ENCODE measurements at regions of chr17 and their contacts with region 1.

Region 1: GRCh38 chr17:78082988-78083387 is 45.6 kb downstream of the TMC6 start:
- DNase-seq: no peak
- H3K4me3 Mint-ChIP-seq: no peak overlapping the region
- H3K27ac Mint-ChIP-seq: no peak overlapping the region
- H3K4me1 Mint-ChIP-seq: peaks cover 6% of the 10 kb centered on the region
- H3K27me3 Mint-ChIP-seq: no peaks in the 10 kb centered on the region

Region 2: GRCh38 chr17:78176548-78177025 is 93.6 kb after region 1 on chr17:
- intact Hi-C with region 1: loop called (anchors 1 kb)
- DNase-seq: peak; percentile 95
- H3K4me3 Mint-ChIP-seq: no peak overlapping the region
- H3K27ac Mint-ChIP-seq: no peak overlapping the region
- H3K4me1 Mint-ChIP-seq: peaks cover 38% of the 10 kb centered on the region
- H3K27me3 Mint-ChIP-seq: no peaks in the 10 kb centered on the region